ENCODE measurements at regions of chr3 and their contacts with region 1.

Region 1: GRCh38 chr3:99833617-99834205 is 16.0 kb downstream of the CMSS1 start:
- DNase-seq: no peak
- H3K4me3 Mint-ChIP-seq: no peak overlapping the region
- H3K27ac Mint-ChIP-seq: no peak overlapping the region
- H3K4me1 Mint-ChIP-seq: peaks cover 5% of the 10 kb centered on the region
- H3K27me3 Mint-ChIP-seq: no peaks in the 10 kb centered on the region
- CTCF ChIP-seq: no peak

Region 2: GRCh38 chr3:99620077-99620767 is 213.5 kb before region 1 on chr3:
- CTCF ChIA-PET with region 1: no interaction called
- POLR2A ChIA-PET with region 1: no interaction called
- intact Hi-C with region 1: no loop called
- DNase-seq: no peak
- H3K4me3 Mint-ChIP-seq: no peak overlapping the region
- H3K27ac Mint-ChIP-seq: no peak overlapping the region
- H3K4me1 Mint-ChIP-seq: peaks cover 2% of the 10 kb centered on the region
- H3K27me3 Mint-ChIP-seq: no peaks in the 10 kb centered on the region
- CTCF ChIP-seq: no peak

Region 3: DNA sequence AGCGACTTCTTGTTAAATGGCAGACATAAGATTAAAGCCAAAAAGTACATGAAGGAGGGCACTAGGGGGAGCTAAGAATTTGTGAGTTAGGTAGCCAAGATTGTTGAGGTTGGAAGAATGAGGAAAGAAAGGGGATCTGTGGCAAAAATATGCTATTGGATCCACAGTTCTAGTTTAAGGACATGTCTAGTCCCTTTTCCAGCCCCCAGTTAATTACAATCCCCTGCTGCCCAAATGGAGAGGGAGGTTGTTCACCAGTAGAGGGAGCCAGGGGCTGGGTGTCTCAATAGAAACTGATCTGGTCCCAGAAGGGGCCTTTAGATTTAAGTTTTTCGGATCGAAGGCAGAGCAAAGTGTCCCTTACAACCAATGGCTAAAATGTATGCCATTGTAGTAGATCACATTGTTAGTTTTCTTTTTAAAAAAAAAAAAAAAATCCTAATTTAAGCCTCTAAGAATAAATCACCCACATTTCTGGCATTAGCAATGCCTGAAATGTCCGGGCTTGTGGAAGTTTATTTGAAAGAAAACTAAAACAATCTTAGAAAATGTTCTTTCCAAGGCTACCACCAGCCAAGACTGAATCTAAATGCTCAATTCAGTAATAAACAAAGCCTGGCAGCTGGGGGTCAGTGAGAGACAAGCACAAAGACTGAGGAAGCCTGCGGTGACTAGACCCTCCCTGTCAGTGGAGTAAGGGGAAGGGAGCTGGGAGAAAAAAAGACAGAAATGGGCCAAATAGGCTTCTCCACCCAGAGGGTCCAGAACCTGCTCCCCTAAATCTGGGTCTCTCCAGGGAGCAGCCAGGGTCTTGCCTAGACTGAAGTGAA is 188.2 kb before region 1 on chr3:
- CTCF ChIA-PET with region 1: no interaction called
- POLR2A ChIA-PET with region 1: no interaction called
- intact Hi-C with region 1: no loop called
- DNase-seq: peak; percentile 57
- H3K4me3 Mint-ChIP-seq: no peak overlapping the region
- H3K27ac Mint-ChIP-seq: peak overlapping the region; percentile 63
- H3K4me1 Mint-ChIP-seq: peaks cover 84% of the 10 kb centered on the region
- H3K27me3 Mint-ChIP-seq: no peaks in the 10 kb centered on the region
- CTCF ChIP-seq: peak; percentile 85

Region 4: DNA sequence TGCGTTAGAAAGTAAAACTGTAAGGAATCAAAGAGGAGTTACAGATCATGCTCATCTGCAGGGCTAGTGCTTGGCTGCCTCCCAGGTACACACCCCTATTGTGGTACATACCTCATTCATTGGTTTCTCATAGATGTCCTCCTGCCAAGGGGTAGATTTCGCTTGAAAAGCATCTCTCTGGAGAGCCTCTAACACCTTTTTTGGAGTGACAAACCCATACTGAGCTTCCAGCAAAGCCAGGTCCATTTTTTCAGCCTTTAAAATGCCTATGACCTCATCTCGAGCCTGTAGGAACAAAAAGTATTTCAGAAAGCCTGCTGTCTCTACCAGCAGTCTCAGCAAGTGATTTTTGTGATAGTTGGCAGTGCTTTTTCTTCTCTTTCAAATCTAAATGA is 96.0 kb after region 1 on chr3:
- CTCF ChIA-PET with region 1: interaction called, 11 read pairs
- POLR2A ChIA-PET with region 1: no interaction called
- intact Hi-C with region 1: no loop called
- DNase-seq: peak; percentile 68
- H3K4me3 Mint-ChIP-seq: peak overlapping the region; percentile 34
- H3K27ac Mint-ChIP-seq: peak overlapping the region; percentile 78
- H3K4me1 Mint-ChIP-seq: peaks cover 13% of the 10 kb centered on the region
- H3K27me3 Mint-ChIP-seq: no peaks in the 10 kb centered on the region
- CTCF ChIP-seq: no peak

Region 5: DNA sequence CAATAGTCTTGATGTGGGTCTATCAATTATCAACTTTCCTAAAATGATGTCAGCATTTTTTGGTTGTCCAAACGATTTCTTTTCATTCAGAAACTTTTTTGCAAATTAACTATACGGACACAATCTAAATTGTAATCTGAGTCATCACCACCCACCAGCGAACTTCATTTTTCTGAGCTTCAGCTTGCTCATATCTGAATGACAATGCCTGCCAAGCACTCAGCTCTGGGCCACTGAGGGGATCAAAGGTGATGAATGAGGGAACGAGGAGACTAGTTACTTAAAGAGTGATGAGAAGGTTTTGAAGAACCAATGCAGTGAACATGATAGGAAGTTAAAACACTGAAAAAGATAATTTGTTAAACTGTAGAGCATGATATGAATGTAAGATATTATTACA is 412.2 kb after region 1 on chr3:
- CTCF ChIA-PET with region 1: interaction called, 10 read pairs
- POLR2A ChIA-PET with region 1: no interaction called
- intact Hi-C with region 1: no loop called
- DNase-seq: no peak
- H3K4me3 Mint-ChIP-seq: no peak overlapping the region
- H3K27ac Mint-ChIP-seq: no peak overlapping the region
- H3K4me1 Mint-ChIP-seq: no peaks in the 10 kb centered on the region
- H3K27me3 Mint-ChIP-seq: no peaks in the 10 kb centered on the region
- CTCF ChIP-seq: no peak

Region 6: DNA sequence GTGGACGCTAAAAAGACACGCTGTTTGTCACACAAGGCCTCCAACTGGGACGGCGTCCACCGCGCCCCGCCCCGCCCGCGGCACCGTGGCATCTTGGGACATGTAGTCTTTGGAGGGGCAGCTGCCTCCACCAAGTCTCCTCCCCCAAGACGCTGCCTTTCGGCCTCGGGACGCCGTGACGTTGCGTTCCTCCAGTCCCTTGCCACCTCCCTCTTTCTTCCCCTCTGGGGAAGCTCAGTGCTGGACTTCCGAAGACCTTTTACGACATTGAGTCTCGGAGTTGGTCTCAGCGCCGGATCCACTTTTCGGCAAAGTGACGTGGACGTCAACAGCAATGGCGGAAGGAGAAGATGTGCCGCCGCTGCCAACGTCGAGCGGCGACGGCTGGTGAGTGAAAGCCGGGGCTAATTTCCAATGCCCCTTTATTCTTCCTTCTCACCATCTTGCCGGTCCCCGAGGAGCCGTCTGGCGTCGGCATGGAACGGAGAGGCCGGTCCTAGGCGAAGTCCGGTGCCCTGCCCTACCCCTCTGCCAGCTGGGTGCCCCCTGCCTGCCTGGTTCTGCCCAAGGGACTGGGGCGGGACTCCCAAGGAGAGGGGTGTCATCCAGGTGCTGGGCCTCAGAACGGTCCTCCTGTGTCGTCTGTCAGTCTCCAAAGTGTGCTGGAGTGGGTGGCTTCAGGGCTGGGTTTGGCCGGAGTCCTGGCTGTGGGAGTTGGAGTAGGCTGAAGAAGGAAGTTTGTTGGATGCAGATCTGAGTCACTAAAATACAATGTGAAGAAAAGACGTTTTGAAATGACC is 427.2 kb after region 1 on chr3 and contains the start of gene TBC1D23:
- CTCF ChIA-PET with region 1: interaction called, 139 read pairs
- POLR2A ChIA-PET with region 1: interaction called, 11 read pairs
- intact Hi-C with region 1: no loop called
- DNase-seq: peak; percentile 99
- H3K4me3 Mint-ChIP-seq: peak within 1 kb of the TSS; percentile 78
- H3K27ac Mint-ChIP-seq: peak within 1 kb of the TSS; percentile 95
- H3K4me1 Mint-ChIP-seq: peaks cover 45% of the 10 kb centered on the region
- H3K27me3 Mint-ChIP-seq: no peaks in the 10 kb centered on the region
- CTCF ChIP-seq: no peak
- total RNA-seq, gene TBC1D23: 34.5 and 34.8 TPM in 2 replicates

Region 7: DNA sequence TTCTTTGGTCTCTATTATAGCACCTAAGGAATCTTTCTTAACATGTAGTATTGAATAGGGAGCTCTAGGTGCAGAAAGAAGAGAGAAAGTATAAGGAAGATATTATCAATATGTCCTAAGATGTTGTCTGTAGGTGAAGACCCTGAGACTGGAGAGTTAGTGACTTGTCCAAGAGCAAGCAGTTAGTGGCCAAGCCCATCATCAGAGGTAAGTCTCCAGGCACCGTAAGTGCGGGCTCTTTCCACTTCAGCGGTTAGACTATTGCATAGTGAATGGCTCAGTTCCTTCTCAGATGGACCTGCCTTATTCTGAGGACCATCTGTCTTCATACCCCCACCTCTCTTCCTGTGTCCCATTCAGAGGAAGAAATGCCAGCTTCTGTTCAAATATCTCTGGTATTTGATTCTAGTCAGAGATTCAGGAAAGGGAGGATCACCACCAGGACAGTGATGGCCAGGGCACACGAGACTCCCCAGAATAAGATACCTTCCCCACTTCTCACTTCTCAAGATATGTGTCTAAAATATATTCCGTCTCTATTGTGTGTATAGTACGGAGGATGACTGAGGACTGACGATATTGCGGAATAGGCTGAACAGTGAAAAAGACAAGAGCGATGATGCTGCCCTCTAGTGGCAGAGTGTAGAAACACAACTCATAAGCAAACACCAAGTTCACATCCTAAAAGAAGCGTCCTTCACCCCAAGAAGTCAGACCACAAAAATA is 756.6 kb after region 1 on chr3:
- CTCF ChIA-PET with region 1: interaction called, 3 read pairs
- POLR2A ChIA-PET with region 1: no interaction called
- intact Hi-C with region 1: loop called (anchors 1 kb)
- DNase-seq: peak; percentile 83
- H3K4me3 Mint-ChIP-seq: no peak overlapping the region
- H3K27ac Mint-ChIP-seq: no peak overlapping the region
- H3K4me1 Mint-ChIP-seq: peaks cover 8% of the 10 kb centered on the region
- H3K27me3 Mint-ChIP-seq: no peaks in the 10 kb centered on the region
- CTCF ChIP-seq: peak; percentile 75

Measured in MCF 10A (cell line).